ENCODE measurements at regions of chr1 and their contacts with region 1.

Region 1: DNA sequence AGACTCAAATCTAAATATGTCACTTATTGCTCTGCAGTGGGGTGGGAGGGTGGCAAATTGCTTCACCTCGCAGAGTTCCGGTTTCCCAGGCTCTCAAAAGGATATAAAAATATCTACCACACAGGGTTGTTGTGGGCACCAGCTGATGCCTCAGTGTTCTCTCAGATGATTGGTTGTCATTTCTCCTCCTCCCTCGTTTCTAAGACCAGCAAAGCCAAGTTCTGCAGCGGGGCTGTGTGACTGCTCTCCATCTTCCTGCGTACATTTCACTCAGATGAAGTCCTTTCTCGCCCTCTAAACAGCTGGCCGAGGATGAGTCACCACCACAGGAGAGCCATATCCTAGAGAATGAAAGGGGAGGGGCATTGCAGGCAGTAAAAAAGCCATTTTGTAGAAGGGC is 35.0 kb upstream of the VWA5B1 start:
- DNase-seq: peak; percentile 36
- H3K4me3 ChIP-seq: no peak overlapping the region
- H3K27ac ChIP-seq: no peak overlapping the region
- H3K4me1 ChIP-seq: no peaks in the 10 kb centered on the region
- H3K27me3 ChIP-seq: no peaks in the 10 kb centered on the region
- CTCF ChIP-seq: no peak

Region 2: DNA sequence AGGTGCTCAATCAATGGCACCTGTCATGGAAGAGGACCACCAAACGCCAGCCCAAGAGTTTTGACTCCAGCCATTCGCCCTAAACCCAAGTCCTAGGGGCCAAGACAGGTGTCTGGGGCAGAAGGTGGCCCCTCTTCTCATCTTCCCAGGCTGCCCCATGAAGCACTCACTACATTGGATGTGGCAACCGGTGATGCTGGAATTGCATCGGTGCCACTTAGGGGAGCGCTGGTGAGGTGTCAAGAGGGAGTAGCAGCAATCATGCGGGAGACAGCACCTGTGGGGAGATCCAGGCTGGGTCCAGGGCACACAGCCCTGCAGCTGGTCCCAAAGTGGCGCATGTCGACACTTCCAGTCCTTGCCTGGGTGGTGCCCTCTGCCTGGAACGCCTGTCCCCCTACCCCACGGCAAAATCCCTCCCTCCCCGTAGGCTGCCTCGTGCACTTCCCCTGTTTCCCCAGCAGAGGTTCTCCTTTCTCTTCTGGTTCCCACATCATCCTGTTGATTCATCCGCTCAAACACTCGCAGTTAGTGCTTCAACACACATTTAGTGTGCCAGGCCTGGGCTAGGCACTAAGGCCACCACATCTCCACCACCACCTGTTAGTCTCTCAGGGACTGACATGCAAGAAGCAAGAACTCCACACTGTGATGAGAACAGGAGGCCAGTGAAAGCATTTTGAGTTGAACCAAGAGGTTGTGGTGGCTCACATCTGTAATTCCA is 154.9 kb before region 1 on chr1:
- CTCF ChIA-PET with region 1: no interaction called
- dilution Hi-C with region 1: no loop called
- in situ Hi-C with region 1: no loop called
- intact Hi-C with region 1: no loop called
- DNase-seq: peak; percentile 57
- H3K4me3 ChIP-seq: no peak overlapping the region
- H3K27ac ChIP-seq: no peak overlapping the region
- H3K4me1 ChIP-seq: peaks cover 12% of the 10 kb centered on the region
- H3K27me3 ChIP-seq: no peaks in the 10 kb centered on the region
- CTCF ChIP-seq: peak; percentile 86 to 93

Region 3: GRCh38 chr1:20124456-20125057 is 131.1 kb before region 1 on chr1:
- CTCF ChIA-PET with region 1: no interaction called
- dilution Hi-C with region 1: no loop called
- in situ Hi-C with region 1: no loop called
- intact Hi-C with region 1: no loop called
- DNase-seq: peak; percentile 91
- H3K4me3 ChIP-seq: no peak overlapping the region
- H3K27ac ChIP-seq: peak overlapping the region; percentile 36
- H3K4me1 ChIP-seq: peaks cover 11% of the 10 kb centered on the region
- H3K27me3 ChIP-seq: no peaks in the 10 kb centered on the region
- CTCF ChIP-seq: no peak

Region 4: DNA sequence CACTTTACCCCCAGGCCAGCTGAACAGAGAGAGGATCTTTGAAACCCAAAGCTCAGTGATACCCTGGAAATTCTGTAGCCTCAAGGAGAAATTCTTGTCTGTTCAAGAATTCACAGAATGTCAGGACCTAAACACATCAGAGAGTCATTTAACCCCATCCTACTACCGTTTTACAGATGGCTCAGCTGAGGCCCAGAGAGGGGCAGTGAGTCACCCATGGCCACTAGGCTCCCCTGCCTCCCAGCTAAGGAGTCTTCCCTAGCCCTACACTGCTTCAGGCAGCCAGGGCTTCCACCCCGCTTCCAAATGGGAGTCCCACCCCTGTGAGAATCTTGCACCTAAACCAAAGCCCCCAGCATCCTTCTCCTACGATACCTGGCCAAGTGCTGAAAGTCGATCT is 63.3 kb after region 1 on chr1:
- CTCF ChIA-PET with region 1: no interaction called
- dilution Hi-C with region 1: loop called (anchors 5 kb)
- in situ Hi-C with region 1: no loop called
- intact Hi-C with region 1: no loop called
- DNase-seq: no peak
- H3K4me3 ChIP-seq: no peak overlapping the region
- H3K27ac ChIP-seq: no peak overlapping the region
- H3K4me1 ChIP-seq: no peaks in the 10 kb centered on the region
- H3K27me3 ChIP-seq: no peaks in the 10 kb centered on the region
- CTCF ChIP-seq: no peak

Region 5: DNA sequence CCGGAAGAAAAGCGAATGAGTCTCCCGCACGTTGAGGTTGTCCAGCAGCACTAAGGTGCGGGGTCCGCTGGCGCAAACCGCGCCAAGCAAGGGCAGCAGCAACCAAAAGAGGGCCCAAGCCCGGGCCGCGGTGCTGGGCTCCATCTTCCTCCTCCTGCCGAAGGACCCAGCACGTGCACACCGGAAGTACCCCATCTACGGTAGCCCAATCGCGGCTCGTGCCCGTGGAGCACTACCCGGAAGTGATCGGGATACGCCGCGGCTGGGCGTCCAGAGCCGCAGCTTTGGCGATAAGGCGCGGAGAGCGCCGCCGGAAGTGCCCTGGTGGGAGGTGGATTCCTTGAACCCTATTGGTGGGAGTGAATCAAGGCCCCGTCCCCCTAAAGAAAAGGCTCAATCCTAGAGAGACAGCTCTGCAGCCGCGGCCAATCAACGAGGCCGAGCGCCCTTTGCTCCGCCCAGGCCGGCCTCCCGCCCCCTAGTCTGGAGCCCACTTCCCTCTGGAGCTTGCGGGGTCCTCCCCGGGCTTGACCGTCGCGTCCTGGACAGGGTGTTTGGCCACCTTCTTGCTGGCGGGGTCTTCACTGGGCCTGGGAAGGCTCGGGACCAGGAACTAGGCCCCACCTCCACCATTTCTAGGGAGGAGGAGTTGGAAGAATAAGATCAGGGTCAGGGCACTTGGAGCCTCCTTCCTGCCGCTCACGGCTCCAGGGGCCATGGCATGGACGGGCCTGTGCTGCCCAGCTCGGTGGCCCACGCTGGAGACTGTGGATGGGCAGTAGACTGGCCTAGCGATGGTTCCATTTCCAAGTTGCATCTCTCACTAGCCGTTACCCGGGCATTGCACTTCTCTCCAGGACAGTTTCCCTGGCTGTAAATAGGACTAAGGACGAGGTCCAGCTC is 405.8 kb after region 1 on chr1 and contains the start of gene DDOST:
- CTCF ChIA-PET with region 1: no interaction called
- dilution Hi-C with region 1: no loop called
- in situ Hi-C with region 1: no loop called
- intact Hi-C with region 1: no loop called
- DNase-seq: peak; percentile 97
- H3K4me3 ChIP-seq: peak within 1 kb of the TSS; percentile 90 to 98 (median 95)
- H3K27ac ChIP-seq: peak within 1 kb of the TSS; percentile 35
- H3K4me1 ChIP-seq: peaks cover 20% of the 10 kb centered on the region
- H3K27me3 ChIP-seq: no peaks in the 10 kb centered on the region
- CTCF ChIP-seq: peak; percentile 32 to 61
- total RNA-seq, gene DDOST: 181 to 238 TPM